ENCODE measurements at regions of chr16 and their contacts with region 1.

Region 1: DNA sequence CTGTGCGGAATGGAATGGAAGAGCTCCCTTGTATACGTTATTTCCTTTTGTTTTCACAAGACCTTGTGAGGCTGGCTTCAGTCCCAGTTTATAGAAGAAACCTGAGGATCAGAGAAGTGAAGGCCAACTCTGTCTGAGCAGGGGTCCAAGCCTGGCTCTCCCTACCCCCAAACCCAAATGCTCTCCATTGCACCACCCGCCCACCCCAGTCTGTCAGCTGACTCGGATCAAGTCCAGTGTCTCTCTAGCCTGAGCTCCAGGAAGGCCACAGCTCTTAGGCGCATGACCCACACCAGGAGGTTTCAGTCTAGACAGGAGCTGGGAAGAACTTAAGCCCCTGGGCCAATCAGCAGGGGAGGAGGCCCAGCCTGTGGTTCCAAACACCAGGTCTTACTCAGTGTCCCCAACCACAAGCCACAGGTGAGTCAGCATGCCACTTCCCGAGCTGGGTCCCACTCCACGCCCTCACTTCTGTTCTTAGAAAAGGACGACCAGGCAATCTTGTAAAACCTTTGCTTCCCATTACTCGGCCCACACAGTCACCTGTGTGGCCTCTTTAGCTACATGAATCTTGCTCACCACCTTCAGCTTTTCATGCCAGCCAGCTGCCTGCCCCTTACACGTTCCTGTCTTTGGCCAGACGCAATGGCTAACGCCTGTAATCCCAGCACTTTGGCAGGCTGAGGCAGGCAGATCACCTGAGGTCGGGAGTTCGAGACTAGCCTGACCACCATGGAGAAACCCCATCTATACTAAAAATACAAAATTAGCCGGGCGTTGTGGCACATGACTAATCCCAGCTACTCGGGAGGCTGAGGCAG is 27.8 kb downstream of the TK2 start:
- DNase-seq: peak; percentile 100
- H3K4me3 ChIP-seq: no peak overlapping the region
- H3K27ac ChIP-seq: peak overlapping the region; percentile 69
- H3K4me1 ChIP-seq: peaks cover 68% of the 10 kb centered on the region
- H3K27me3 ChIP-seq: no peaks in the 10 kb centered on the region
- CTCF ChIP-seq: no peak

Region 2: DNA sequence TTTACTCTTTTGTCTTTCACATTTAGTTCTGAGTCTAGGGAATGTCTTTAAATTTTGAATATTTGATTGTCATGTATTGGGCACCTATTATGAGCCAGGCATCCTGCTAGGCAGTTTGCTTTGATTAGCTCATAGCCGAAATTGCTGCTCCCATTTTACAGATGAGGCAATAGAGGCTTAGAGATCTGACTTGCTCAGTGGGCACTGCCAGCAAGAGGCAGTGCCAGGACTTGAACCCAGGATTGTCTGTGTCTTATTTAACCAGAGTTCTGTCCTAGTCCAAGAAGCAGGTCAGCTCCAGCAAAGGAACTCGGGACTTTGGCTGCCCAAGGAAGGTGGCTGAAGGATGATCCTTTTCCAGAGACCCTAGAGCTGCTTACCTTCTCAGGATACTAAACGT is 70.6 kb before region 1 on chr16:
- CTCF ChIA-PET with region 1: no interaction called
- dilution Hi-C with region 1: loop called (anchors 5 kb)
- in situ Hi-C with region 1: no loop called
- intact Hi-C with region 1: no loop called
- DNase-seq: no peak
- H3K4me3 ChIP-seq: no peak overlapping the region
- H3K27ac ChIP-seq: no peak overlapping the region
- H3K4me1 ChIP-seq: no peaks in the 10 kb centered on the region
- H3K27me3 ChIP-seq: no peaks in the 10 kb centered on the region
- CTCF ChIP-seq: no peak